Naive thymus-derived CD4-positive, alpha-beta T cell (primary cell): ENCODE measurements at regions of chr16 and their contacts with region 1.

Region 1: DNA sequence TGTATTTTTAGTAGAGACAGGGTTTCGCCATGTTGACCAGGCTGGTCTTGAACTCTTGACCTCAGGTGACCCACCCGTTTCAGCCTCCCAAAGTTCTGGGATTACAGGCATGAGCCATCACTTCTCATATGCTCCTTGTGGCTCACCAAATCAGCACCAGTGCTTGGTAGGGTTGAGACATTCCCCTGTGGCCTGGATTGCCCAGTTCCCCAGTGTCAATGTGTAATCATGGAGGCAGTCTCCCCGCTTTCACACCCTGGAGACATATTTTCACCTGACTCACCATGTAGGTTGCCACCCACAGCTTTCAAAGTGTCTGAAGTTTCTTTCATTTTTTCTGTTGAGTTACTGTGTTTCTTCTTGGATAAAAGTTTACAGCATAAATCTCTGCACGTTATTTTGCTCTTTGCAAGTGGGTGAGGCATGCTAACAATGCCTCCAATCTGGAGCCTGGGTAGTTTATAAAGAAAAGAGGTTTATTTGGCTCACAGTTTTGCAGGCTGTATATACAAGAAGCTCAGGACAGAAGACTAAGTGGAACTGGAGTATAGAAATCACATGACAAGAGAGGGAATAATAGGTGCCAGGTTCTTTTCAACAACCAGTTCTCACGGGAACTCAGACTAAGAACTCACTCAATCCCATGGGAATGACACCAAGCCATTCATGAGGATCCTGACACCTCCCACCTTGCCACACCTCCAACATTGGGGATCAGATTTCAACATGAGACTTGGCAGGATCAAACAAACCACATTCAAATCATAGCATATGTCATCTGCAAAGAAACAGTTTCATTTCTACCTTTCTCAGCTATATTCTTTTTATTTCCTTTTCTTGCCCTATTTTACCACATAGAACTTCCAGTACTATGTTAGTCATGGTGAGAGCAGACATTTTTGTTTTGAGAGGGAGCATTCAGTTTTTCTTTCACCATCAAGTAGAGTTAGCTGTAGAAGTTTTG is 113.2 kb downstream of the PHKB start:
- DNase-seq: peak in 1 of 9 donors; percentile 34
- ATAC-seq: peak; percentile 32
- H3K4me3 ChIP-seq: peak overlapping the region; percentile 8
- H3K4me3 Mint-ChIP-seq: peak overlapping the region in 6 of 10 donors; percentile 4 to 64 (median 34)
- H3K27ac ChIP-seq: no peak overlapping the region
- H3K27ac Mint-ChIP-seq: peak overlapping the region in 6 of 9 donors; percentile 41 to 88 (median 62)
- H3K4me1 ChIP-seq: peaks cover 8 to 23% of the 10 kb centered on the region in 2 donors
- H3K4me1 Mint-ChIP-seq: peaks cover 30 to 53% (median 37%) of the 10 kb centered on the region in 7 donors
- H3K27me3 ChIP-seq: no peaks in the 10 kb centered on the region
- H3K27me3 Mint-ChIP-seq: no peaks in the 10 kb centered on the region

Region 2: DNA sequence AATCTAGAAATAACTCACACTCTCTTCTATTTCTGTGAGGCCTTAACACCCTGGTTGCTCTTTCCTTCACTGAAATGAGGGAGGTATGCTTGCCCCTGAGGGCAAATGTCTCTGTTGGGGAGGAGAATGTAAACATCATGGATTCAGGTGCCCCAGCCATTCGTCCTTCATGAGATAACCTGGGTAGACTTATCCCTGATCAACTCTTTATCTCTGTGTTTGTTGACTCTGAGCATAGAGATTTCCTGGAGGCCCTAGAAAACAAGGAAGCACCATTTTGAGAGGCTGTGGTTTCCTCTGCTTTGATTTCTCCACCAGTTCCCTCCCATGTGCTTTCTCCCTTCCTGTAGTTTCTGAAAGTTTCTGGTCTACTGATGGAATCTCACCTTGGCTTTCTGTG is 35.9 kb before region 1 on chr16:
- CTCF ChIA-PET with region 1: no interaction called
- POLR2A ChIA-PET with region 1: no interaction called
- intact Hi-C with region 1: loop called in 1 of 2 experiments (anchors 5 kb)
- DNase-seq: no peak
- ATAC-seq: no peak
- H3K4me3 ChIP-seq: no peak overlapping the region
- H3K4me3 Mint-ChIP-seq: no peak overlapping the region
- H3K27ac ChIP-seq: no peak overlapping the region
- H3K27ac Mint-ChIP-seq: peak overlapping the region in 4 of 9 donors; percentile 2 to 65 (median 52)
- H3K4me1 ChIP-seq: no peaks in the 10 kb centered on the region
- H3K4me1 Mint-ChIP-seq: peaks cover 0 to 9% (median 5%) of the 10 kb centered on the region in 7 donors
- H3K27me3 ChIP-seq: no peaks in the 10 kb centered on the region
- H3K27me3 Mint-ChIP-seq: no peaks in the 10 kb centered on the region

Region 3: GRCh38 chr16:47774661-47775060 is 200.3 kb after region 1 on chr16:
- CTCF ChIA-PET with region 1: no interaction called
- POLR2A ChIA-PET with region 1: no interaction called
- intact Hi-C with region 1: no loop called
- DNase-seq: no peak
- ATAC-seq: no peak
- H3K4me3 ChIP-seq: no peak overlapping the region
- H3K4me3 Mint-ChIP-seq: no peak overlapping the region
- H3K27ac ChIP-seq: no peak overlapping the region
- H3K27ac Mint-ChIP-seq: no peak overlapping the region
- H3K4me1 ChIP-seq: no peaks in the 10 kb centered on the region
- H3K4me1 Mint-ChIP-seq: peaks cover 5 to 12% (median 11%) of the 10 kb centered on the region in 7 donors
- H3K27me3 ChIP-seq: no peaks in the 10 kb centered on the region
- H3K27me3 Mint-ChIP-seq: peaks cover 10 to 20% (median 12%) of the 10 kb centered on the region in 5 donors